ENCODE measurements at regions of chr3 and their contacts with region 1.

Region 1: DNA sequence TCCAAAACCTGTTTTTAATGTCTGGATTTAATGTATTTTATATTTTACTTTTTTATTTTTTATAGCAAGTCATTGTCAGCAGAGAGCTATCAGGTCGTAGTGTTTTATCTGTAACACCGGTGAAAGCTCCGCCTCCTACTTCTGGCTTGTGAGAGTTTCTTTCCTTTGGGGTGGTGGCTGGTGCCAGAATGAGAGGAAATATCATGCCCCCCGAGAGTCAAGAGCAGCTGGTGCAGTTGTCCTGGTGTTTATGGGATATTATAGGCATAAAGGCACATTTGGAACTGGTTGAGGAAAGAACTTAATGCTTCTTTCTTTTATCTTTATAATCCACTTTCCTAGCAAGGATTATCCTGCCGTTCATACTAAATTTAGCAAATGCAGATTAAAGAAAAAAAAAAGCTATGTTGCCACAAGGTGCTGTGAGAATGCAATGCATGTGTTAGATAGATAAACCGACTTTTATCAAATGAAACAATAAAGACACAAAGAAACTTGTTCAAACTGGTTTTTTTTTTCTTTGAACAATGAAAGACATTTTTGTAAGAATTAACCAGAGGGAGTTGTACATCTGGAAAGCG is 260.1 kb upstream of the PLSCR5 start:
- DNase-seq: no peak
- H3K4me3 ChIP-seq: no peak overlapping the region
- H3K27ac ChIP-seq: no peak overlapping the region
- H3K4me1 ChIP-seq: no peaks in the 10 kb centered on the region
- H3K27me3 ChIP-seq: no peaks in the 10 kb centered on the region
- CTCF ChIP-seq: no peak

Region 2: GRCh38 chr3:146000455-146000854 is 864.8 kb before region 1 on chr3:
- intact Hi-C with region 1: loop called (anchors 10 kb)
- DNase-seq: no peak
- H3K4me3 ChIP-seq: no peak overlapping the region
- H3K27ac ChIP-seq: no peak overlapping the region
- H3K4me1 ChIP-seq: no peaks in the 10 kb centered on the region
- H3K27me3 ChIP-seq: no peaks in the 10 kb centered on the region
- CTCF ChIP-seq: no peak